ENCODE measurements at regions of chr2 and their contacts with region 1.

Region 1: DNA sequence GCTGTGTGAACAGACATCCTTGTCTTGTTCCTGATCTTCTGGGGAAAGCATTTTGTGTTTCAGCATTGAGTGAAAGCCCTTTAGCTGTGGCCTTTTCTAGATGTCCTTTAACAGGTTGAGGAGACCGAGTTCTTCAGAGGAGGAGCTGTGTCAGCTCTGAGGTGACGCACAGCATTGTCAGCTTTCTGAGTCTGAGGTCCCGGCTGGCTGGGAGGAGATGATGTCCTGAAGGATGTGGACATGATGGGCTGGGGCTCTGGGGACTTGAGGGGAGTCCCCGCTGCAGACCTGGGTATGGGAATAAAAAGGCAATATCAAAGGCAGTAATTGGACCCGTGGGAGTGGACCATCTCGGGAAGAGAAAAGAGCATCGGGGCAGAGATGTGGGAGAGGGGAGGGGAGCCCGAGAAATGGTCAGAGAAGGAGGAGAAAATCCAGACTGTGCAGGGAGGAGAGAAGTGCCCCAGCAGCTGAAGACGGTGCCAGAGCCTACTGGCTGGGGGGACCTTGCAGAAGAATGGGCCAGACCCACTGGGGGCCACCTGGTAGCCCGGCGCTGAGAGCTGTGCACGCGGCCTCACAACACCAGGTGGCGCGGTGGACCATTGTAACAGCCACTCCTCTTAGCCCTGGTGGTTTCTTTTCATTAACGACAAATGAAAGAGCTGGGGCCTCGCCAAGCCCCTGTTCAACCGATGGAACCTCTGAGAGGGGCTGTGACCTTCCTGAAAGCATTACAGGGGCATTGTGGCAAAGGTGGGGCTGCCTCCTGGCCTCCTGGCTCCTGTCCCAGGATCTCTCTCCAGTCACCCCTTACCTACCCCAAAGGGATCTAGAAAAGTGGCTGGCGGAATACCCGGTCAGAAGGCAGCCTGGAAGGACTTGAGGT is 61.6 kb downstream of the ST3GAL5 start:
- DNase-seq: peak; percentile 72 to 88
- ATAC-seq: peak; percentile 95 to 99
- H3K4me3 ChIP-seq: peak overlapping the region; percentile 21; the same call in 1 of the 3 replicates
- H3K27ac ChIP-seq: peak overlapping the region; percentile 74 to 84
- H3K4me1 ChIP-seq: peaks cover 8% of the 10 kb centered on the region
- CTCF ChIP-seq: peak; percentile 96
- EP300 ChIP-seq: no peak
- POLR2A ChIP-seq: no peak
- RAD21 ChIP-seq: peak; percentile 99

Region 2: GRCh38 chr2:85707304-85707703 is 119.9 kb before region 1 on chr2:
- CTCF ChIA-PET with region 1: interaction called, 17 read pairs
- POLR2A ChIA-PET with region 1: no interaction called
- DNase-seq: peak; percentile 92 to 96
- ATAC-seq: peak; percentile 82 to 94
- H3K4me3 ChIP-seq: no peak overlapping the region
- H3K27ac ChIP-seq: peak overlapping the region; percentile 84; a peak in 5 of 6 replicates
- H3K4me1 ChIP-seq: peaks cover 56% of the 10 kb centered on the region
- CTCF ChIP-seq: peak; percentile 98
- EP300 ChIP-seq: no peak
- POLR2A ChIP-seq: no peak
- RAD21 ChIP-seq: peak; percentile 86 to 89

Region 3: GRCh38 chr2:85750587-85751575 is 76.4 kb before region 1 on chr2:
- CTCF ChIA-PET with region 1: interaction called, 1,675 read pairs
- POLR2A ChIA-PET with region 1: no interaction called
- DNase-seq: peak; percentile 72 to 87
- ATAC-seq: peak; percentile 35 to 76; a peak in 5 of 6 replicates
- H3K4me3 ChIP-seq: no peak overlapping the region
- H3K27ac ChIP-seq: peak overlapping the region; percentile 29 to 61; a peak in 5 of 6 replicates
- H3K4me1 ChIP-seq: peaks cover 41% of the 10 kb centered on the region
- CTCF ChIP-seq: peak; percentile 89
- EP300 ChIP-seq: no peak
- POLR2A ChIP-seq: no peak
- RAD21 ChIP-seq: peak; percentile 90 to 95

Region 4: DNA sequence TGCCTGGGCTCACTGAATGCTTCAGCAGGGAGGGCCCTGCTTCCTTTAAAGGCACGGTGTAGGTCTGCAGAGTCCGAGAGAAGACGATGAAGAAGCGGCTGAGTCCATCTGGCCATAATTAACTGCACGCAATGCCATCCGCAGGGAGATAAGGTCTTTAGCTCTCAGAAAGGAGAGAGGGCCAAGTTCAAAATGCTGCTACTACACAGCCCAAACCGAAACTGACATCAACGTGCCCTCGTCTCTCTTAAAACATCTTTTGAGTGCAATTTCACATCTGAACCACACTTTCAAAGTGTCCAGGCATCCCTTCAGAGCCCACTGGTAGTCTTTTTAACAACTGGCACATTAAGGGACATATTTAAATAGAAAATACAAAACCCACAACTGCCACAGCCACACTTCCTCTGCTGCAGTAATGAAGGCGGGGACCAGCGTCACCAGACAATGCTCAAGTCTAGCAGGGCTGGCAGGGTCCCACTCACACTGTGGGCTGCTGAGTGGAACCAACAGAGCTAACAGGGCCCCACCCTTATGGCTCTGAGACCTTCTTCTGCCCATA is 25.8 kb after region 1 on chr2:
- CTCF ChIA-PET with region 1: interaction called, 24 read pairs
- POLR2A ChIA-PET with region 1: no interaction called
- DNase-seq: no peak
- ATAC-seq: no peak
- H3K4me3 ChIP-seq: no peak overlapping the region
- H3K27ac ChIP-seq: no peak overlapping the region
- H3K4me1 ChIP-seq: no peaks in the 10 kb centered on the region
- CTCF ChIP-seq: no peak
- EP300 ChIP-seq: no peak
- POLR2A ChIP-seq: no peak
- RAD21 ChIP-seq: no peak

Region 5: DNA sequence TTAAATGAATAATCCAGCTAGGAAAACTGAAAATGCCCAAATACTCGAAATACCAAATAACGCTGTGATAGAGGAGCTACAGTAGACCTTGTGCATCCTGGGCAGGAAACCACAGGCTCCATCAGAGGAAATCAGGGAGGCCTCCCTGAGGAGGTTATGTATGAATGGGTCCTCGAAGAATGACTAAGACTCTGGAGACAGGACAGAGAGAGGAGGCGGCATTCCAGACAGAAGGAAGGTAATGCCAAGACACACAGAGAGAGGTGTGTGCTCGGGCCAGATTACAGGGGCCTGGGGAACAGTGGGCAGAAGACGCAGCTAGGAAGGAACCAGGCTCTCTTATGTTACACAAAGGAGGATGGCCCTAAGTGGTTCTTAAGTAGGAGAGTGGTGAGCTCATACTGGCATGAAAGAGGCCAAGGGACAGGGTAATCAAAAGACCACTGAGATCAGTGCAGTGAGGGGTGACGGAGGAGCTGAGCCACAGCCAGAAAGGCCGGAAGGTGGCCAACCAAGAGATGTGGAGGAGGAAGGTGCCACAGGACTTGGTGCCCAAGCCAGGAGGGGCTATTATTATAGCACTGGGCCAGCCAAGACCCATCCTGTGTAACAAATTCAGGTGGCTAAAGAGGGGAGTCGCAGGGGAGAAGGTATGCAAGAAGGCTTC is 51.6 kb after region 1 on chr2:
- CTCF ChIA-PET with region 1: interaction called, 131 read pairs
- POLR2A ChIA-PET with region 1: no interaction called
- DNase-seq: no peak
- ATAC-seq: peak; percentile 34 to 61; a peak in 3 of 6 replicates
- H3K4me3 ChIP-seq: no peak overlapping the region
- H3K27ac ChIP-seq: peak overlapping the region in 1 of 2 experiments; percentile 9; a peak in 1 of 6 replicates
- H3K4me1 ChIP-seq: peaks cover 33% of the 10 kb centered on the region
- CTCF ChIP-seq: no peak
- EP300 ChIP-seq: no peak
- POLR2A ChIP-seq: no peak
- RAD21 ChIP-seq: no peak

Region 6: DNA sequence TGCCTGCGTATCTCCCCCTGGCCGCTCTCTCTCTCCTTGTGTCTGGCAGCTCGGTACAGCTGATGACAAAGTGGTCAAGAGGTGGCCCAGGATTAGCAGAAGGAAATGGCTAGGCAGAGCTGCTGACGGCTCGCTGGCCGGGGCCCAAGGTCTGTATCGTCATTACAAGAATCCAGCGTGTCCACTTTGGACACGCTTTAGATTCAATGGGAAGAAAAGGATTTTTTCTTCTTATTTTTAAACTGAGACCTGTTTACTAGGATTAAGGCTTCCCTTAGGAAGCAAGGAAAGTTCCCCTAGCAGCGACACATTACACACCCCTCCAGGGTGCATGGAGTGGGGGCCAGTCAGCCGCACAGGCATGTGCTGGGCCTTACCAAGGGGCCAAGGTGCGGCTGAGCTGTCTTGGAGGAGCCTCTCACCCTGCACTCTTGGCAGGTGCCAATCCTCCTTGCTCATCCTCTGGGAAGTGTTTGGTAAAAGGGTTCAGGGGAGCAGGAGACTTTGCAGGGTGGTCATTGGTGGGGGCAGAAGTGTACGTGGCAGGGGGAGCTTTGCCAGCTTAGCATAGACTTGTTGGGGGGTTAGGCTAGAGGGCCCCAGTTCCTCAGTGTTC is 201.6 kb after region 1 on chr2:
- CTCF ChIA-PET with region 1: interaction called, 39 read pairs
- POLR2A ChIA-PET with region 1: no interaction called
- DNase-seq: no peak
- ATAC-seq: no peak
- H3K4me3 ChIP-seq: no peak overlapping the region
- H3K27ac ChIP-seq: no peak overlapping the region
- H3K4me1 ChIP-seq: no peaks in the 10 kb centered on the region
- CTCF ChIP-seq: no peak
- EP300 ChIP-seq: no peak
- POLR2A ChIP-seq: no peak
- RAD21 ChIP-seq: no peak

Region 7: DNA sequence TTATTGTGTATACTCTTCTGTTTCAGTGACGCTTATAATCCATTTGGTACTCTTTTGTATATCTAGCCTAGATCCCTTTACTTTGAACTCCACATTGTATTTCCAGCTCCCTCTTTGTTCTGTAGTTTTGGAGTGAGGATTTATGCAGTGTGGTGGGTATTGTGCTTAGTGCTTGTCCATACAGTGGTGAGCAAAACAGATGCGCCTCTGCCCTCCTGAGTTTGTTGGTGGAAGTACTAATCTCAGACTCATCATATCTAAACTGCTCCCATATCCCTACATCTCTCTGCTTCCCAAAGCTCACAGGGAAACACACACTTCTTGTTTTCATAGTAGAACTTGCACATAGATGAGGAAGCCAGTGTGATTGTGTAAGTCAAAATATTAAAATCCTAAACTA is 290.9 kb after region 1 on chr2:
- CTCF ChIA-PET with region 1: interaction called, 16 read pairs
- POLR2A ChIA-PET with region 1: no interaction called
- DNase-seq: peak in 1 of 2 experiments; percentile 24
- ATAC-seq: peak; percentile 68 to 69; a peak in 4 of 6 replicates
- H3K4me3 ChIP-seq: no peak overlapping the region
- H3K27ac ChIP-seq: no peak overlapping the region
- H3K4me1 ChIP-seq: peaks cover 6% of the 10 kb centered on the region; the same call in 1 of the 3 replicates
- CTCF ChIP-seq: no peak
- EP300 ChIP-seq: no peak
- POLR2A ChIP-seq: no peak
- RAD21 ChIP-seq: 0 out of 5 replicates have a peak, but pooled peaks of 1 of the 2 experiments have one; percentile 9

Measured in A549 (cell line).